Sigmoid colon (tissue), 7 donors: ENCODE measurements at regions of chr2 and their contacts with region 1.

Region 1: GRCh38 chr2:219253753-219254590 is at the start of gene TUBA4A:
- DNase-seq: peak; percentile 94
- H3K4me3 ChIP-seq: peak within 1 kb of the TSS; percentile 56 to 74 (median 60)
- H3K27ac ChIP-seq: peak within 1 kb of the TSS; percentile 79 to 87 (median 84)
- H3K4me1 ChIP-seq: peaks cover 0 to 52% (median 45%) of the 10 kb centered on the region in 4 donors
- H3K27me3 ChIP-seq: no peaks in the 10 kb centered on the region
- CTCF ChIP-seq: peak in 1 of 4 experiments; percentile 28
- EP300 ChIP-seq: no peak
- POLR2A ChIP-seq: peak; percentile 87 to 96
- total RNA-seq, gene TUBA4A: 47.1 to 109 (median 55.0) TPM

Region 2: DNA sequence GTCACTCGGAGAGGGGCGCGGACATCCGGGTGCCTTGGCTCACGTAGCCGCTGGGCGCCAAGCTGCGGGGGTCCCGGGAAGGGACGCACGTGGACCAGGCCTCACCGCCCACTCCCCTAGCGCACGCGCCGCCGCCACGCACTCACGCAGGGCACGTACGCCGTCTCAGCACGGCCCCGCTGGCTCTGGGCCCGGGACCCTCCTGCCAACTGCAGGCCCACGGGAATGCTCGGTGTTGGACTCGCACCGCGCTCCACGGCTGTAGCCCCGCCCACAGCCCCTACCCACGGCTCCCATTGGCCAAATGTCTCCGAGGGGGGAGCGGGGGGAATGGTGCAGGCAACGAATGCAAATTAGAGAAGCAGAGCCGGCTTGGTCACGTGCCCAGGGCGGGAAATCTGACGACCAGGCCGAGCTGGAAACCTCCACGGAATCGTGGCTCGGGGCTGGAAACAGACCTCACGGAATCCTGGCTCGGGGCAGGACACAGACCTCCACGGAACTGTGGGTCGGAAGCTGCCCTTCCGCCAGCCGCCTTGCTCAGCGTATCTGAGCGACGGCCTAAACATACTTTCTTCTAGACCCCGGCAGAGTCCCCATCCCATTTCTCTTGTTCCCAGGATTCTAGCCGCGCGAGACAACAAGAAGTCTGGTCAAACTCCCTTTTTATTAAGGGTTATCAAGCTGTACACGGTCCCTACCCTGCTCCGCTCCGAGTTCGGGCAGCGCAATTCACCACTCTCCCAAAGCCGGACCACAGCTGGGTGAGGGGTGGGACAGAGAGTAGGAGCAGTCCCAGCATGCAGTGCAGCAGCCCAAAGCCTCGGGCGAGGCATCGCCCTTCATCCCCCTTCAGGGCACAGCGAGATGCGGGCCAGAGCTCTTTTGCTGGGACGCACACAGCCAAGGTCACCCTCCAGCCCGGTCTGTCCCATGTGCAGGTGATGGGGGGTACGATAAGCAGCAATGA is 35.0 kb before region 1 on chr2 and contains the start of gene ABCB6:
- intact Hi-C with region 1: loop called (anchors 5 kb)
- DNase-seq: peak; percentile 99
- H3K4me3 ChIP-seq: peak within 1 kb of the TSS; percentile 41 to 62 (median 54)
- H3K27ac ChIP-seq: peak within 1 kb of the TSS; percentile 84 to 98 (median 96)
- H3K4me1 ChIP-seq: peaks cover 0 to 37% (median 32%) of the 10 kb centered on the region in 4 donors
- H3K27me3 ChIP-seq: no peaks in the 10 kb centered on the region
- CTCF ChIP-seq: no peak
- EP300 ChIP-seq: no peak
- POLR2A ChIP-seq: peak in 1 of 2 donors; percentile 47
- total RNA-seq, gene ABCB6: 11.8 to 23.0 (median 16.1) TPM

Region 3: GRCh38 chr2:219294356-219295351 is 40.7 kb after region 1 on chr2:
- intact Hi-C with region 1: loop called (anchors 2 kb)
- DNase-seq: peak; percentile 91
- H3K4me3 ChIP-seq: peak overlapping the region; percentile 43 to 65 (median 54)
- H3K27ac ChIP-seq: peak overlapping the region; percentile 84 to 91 (median 90)
- H3K4me1 ChIP-seq: peaks cover 0 to 19% (median 18%) of the 10 kb centered on the region in 4 donors
- H3K27me3 ChIP-seq: peaks cover 0 to 2% (median 2%) of the 10 kb centered on the region in 3 donors
- CTCF ChIP-seq: peak; percentile 85 to 99 (median 91)
- EP300 ChIP-seq: no peak
- POLR2A ChIP-seq: no peak